ENCODE measurements at regions of chr20 and their contacts with region 1.

Region 1: DNA sequence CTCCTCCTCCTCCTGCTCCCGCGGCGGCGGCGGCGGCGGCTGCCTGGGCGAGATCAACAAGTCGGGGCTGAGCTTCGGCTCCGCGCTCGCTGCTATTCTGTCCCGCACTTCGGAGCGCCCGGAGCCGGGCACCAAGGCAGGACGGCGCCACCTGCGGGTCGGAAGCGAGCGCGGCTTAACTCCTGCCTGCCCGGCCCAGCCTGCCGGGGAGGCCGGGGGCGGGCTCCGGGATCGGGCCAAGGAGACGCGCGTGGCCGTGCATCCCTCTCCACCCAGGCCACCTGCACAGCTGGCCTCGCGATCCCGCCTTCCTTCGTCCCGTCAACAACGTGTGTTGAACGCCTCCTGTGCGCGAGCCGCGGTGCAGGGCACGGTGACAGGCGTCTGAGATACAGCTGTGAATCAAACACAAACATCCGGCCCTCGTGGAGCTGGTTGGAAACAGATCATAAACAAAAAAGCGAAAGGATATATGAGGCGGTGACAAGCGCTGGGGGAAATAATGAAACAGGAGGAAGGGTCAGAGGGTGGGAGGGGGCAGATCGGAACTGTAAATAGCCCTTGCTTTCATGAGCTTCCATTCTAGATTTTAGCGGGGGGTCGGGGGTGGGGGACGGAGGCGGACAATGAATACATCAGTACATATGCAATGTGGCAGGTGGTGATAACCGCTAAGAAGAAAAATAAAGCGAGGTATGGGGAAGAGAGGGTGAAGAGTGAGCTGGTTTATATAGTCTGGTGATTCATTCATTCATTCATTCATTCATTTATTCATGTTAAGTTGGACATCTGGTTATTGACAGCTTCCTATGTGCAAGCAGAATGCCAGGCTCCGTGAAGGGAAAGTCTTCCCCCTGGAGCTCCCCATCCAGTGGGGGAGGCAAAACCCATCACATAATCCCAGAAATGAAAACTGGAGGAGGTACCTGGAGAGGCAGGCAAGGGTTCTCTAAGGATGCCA is 2.0 kb upstream of the KCNB1 start:
- DNase-seq: peak; percentile 89

Region 2: DNA sequence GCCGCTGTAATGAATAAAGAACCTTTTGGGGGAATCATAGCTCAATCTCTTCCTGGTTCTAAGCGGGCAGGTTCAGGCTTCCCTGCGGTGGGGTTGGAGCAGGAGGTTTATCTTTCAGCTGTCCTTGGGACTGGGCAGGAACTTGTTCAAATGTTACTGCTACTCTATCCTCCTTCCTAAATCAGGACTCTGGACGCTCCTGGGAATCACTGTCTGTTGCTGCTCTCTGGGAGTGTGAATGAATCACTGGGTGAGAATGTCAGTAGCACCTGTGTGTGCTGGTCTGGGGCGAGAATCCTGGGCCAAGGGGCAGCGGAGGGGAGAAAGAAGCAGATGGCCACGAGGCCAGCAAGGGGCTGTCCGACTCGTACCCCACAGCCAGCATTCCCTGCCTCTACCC is 141.2 kb before region 1 on chr20:
- CTCF ChIA-PET with region 1: interaction called, 10 read pairs
- POLR2A ChIA-PET with region 1: no interaction called
- DNase-seq: no peak

Region 3: DNA sequence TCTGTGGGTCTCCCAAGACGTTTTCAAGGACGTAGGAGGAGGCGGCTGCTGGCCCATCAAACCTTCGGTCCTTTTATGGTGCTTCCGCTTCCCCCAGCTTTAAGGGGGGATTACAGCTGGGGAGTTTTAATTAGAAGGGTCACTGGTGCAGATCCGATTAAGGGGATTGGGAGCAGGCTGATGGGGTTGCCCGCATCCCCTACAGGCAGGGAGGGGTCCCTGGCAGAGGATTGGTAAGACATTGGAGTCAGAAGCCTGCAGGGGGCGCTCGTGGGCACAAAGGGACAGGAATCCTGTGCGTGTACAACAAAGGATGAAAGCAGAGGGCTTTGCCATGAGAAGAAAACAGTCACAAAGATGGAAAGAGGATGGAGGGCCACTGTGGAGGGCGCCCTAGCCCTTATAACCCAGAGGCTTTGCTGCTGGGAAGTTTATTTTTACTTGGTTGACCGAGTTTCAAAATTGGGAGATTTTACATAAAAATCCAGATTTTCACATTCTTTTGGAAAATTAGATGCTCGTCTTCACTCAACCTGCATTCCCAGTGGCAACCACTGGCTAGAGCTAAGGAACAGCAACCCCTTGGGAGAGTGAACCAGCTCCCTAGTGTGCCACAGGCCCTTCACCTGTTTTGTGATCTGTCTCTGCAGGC is 99.9 kb before region 1 on chr20:
- CTCF ChIA-PET with region 1: interaction called, 19 read pairs
- POLR2A ChIA-PET with region 1: no interaction called
- DNase-seq: peak; percentile 79

Region 4: GRCh38 chr20:49496553-49497397 is 12.3 kb after region 1 on chr20:
- CTCF ChIA-PET with region 1: no interaction called
- POLR2A ChIA-PET with region 1: no interaction called
- DNase-seq: no peak

Region 5: DNA sequence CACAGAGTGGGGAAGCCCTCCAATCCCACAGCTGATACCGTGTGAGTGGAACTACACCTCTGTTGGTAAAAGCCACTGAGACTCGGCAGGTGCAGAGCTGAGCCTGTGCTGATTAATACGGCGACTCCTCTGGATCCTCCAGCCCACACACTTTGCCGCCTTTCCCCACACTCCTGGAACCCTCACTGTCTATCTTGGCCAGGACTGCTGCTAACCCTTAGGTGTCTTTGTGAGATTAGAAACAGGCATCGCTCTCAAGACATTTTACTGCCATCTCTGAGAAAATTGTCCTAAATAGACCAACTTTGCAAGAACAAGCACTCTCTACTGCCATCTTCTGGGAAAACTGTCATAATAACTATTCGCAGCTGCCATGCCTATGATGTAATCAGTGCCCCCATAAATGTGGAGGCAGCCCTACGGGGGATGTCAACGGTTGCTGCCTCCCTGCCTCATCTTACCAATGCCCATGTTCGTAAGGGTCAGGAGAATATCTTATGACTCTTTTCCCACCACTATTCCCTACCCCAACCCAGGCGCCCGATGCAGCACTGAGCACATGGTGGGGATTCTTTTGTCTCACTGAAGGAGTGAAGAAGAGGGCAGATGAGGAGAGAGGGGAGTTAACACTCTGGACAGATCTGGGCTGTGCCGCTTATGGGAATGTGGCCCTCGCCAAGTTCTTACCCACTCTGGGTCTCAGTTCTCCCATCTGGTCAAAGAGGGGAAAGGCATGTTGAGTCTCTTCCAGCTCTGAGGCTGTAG is 24.2 kb after region 1 on chr20:
- CTCF ChIA-PET with region 1: interaction called, 13 read pairs
- POLR2A ChIA-PET with region 1: no interaction called
- DNase-seq: peak; percentile 59

Measured in HEK293T (cell line).